Activated T-helper 2 cell treated with anti-CD3 and anti-CD28 coated beads, Interferon-gamma antibody, Interleukin-2, Interleukin-4, amounts not matched to agents 10 μg/mL and 5 μg/mL and 100 μg/mL, durations not matched to agents 14 hours and 24 hours and 36 hours (primary cell): ENCODE measurements at regions of chr1 and their contacts with region 1.

Region 1: GRCh38 chr1:22704440-22705067 is 6.1 kb upstream of the EPHB2 start:
- DNase-seq: peak; percentile 60
- H3K4me3 Mint-ChIP-seq: no peak overlapping the region
- H3K27ac Mint-ChIP-seq: no peak overlapping the region
- H3K4me1 Mint-ChIP-seq: peaks cover under 1% of the 10 kb centered on the region
- H3K27me3 Mint-ChIP-seq: peaks cover 14% of the 10 kb centered on the region

Region 2: GRCh38 chr1:22398656-22399420 is 305.7 kb before region 1 on chr1:
- intact Hi-C with region 1: no loop called
- DNase-seq: no peak
- H3K4me3 Mint-ChIP-seq: no peak overlapping the region
- H3K27ac Mint-ChIP-seq: no peak overlapping the region
- H3K4me1 Mint-ChIP-seq: peaks cover 8% of the 10 kb centered on the region
- H3K27me3 Mint-ChIP-seq: peaks cover 55% of the 10 kb centered on the region

Region 3: GRCh38 chr1:22889213-22889827 is 184.8 kb after region 1 on chr1:
- intact Hi-C with region 1: loop called (anchors 10 kb)
- DNase-seq: no peak
- H3K4me3 Mint-ChIP-seq: no peak overlapping the region
- H3K27ac Mint-ChIP-seq: no peak overlapping the region
- H3K4me1 Mint-ChIP-seq: peaks cover 6% of the 10 kb centered on the region
- H3K27me3 Mint-ChIP-seq: peaks cover 4% of the 10 kb centered on the region

Region 4: DNA sequence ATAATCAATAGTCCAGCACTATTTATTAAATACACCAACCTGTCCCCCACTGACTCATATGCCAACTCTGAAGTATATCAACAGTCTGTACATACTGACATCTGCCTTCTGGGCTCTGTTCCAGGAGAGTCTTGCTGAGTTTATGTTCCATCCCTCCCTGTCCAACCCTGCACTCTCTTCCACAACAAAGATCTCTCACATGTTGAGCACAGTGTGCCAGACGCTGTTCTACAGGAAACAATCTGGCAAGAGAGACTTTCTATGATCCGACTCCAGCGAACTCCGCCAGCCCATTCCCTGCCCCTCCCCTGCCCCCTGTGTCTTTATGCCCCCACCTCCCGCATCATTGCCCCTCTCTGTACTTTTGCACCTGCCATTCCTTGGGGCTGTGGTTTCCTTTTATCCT is 264.8 kb after region 1 on chr1:
- intact Hi-C with region 1: loop called (anchors 1 kb)
- DNase-seq: no peak
- H3K4me3 Mint-ChIP-seq: no peak overlapping the region
- H3K27ac Mint-ChIP-seq: no peak overlapping the region
- H3K4me1 Mint-ChIP-seq: no peaks in the 10 kb centered on the region
- H3K27me3 Mint-ChIP-seq: peaks cover 38% of the 10 kb centered on the region